Activated CD4-positive, alpha-beta memory T cell treated with anti-CD3 and anti-CD28 coated beads, Interleukin-2, amount 10 ng/mL, durations not matched to agents 7 days and 5 days (primary cell): ENCODE measurements at regions of chr6 and their contacts with region 1.

Region 1: DNA sequence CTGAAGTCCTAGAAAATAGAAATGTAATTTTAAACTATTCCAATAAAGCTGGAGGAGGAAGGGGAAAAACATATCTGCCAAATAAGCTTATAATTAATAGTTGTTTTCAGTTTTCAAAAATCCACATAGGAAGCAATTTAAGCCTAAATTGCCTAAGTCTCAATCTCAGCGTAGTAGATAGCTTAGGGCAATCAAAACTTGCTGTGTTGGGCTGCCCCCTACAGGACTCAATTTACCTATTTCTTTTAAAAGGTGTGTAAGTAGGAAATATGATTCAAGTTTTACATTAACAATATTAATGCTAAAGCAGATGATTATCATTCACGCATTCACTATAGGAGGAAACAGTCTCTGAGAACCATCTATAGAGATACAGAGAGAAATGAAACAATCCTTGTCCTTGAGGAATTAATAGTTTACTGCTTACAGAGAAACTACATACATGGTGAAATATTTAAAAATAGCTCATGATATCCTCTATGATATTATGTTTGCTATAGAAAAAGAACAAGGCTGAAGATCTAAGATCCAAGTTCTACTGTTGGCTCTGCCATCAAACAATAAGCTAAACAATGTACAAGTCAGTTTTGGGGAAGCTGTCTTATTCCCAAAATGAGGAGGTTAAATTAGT is 102.1 kb downstream of the ATG5 start:
- DNase-seq: peak; percentile 79
- H3K4me3 Mint-ChIP-seq: no peak overlapping the region
- H3K27ac Mint-ChIP-seq: no peak overlapping the region
- H3K4me1 Mint-ChIP-seq: peaks cover 43% of the 10 kb centered on the region
- H3K27me3 Mint-ChIP-seq: no peaks in the 10 kb centered on the region

Region 2: GRCh38 chr6:105431226-105431625 is 792.2 kb before region 1 on chr6:
- CTCF ChIA-PET with region 1: interaction called, 45 read pairs
- POLR2A ChIA-PET with region 1: no interaction called
- DNase-seq: no peak
- H3K4me3 Mint-ChIP-seq: no peak overlapping the region
- H3K27ac Mint-ChIP-seq: no peak overlapping the region
- H3K4me1 Mint-ChIP-seq: peaks cover 3% of the 10 kb centered on the region
- H3K27me3 Mint-ChIP-seq: peaks cover 4% of the 10 kb centered on the region

Region 3: GRCh38 chr6:105733565-105734162 is 489.8 kb before region 1 on chr6:
- CTCF ChIA-PET with region 1: interaction called, 25 read pairs
- POLR2A ChIA-PET with region 1: no interaction called
- DNase-seq: no peak
- H3K4me3 Mint-ChIP-seq: no peak overlapping the region
- H3K27ac Mint-ChIP-seq: no peak overlapping the region
- H3K4me1 Mint-ChIP-seq: peaks cover 48% of the 10 kb centered on the region
- H3K27me3 Mint-ChIP-seq: no peaks in the 10 kb centered on the region

Region 4: GRCh38 chr6:106085984-106086813 is 137.2 kb before region 1 on chr6 and contains the start of gene PRDM1:
- CTCF ChIA-PET with region 1: interaction called, 53 read pairs
- POLR2A ChIA-PET with region 1: interaction called, 10 read pairs
- DNase-seq: peak; percentile 90
- H3K4me3 Mint-ChIP-seq: peak within 1 kb of the TSS; percentile 97
- H3K27ac Mint-ChIP-seq: peak within 1 kb of the TSS; percentile 71
- H3K4me1 Mint-ChIP-seq: peaks cover 68% of the 10 kb centered on the region
- H3K27me3 Mint-ChIP-seq: no peaks in the 10 kb centered on the region
- total RNA-seq, gene PRDM1: 112 to 115 TPM

Region 5: GRCh38 chr6:106114492-106115265 is 108.7 kb before region 1 on chr6:
- CTCF ChIA-PET with region 1: interaction called, 28 read pairs
- POLR2A ChIA-PET with region 1: interaction called, 5 read pairs
- DNase-seq: peak; percentile 77
- H3K4me3 Mint-ChIP-seq: peak overlapping the region; percentile 36
- H3K27ac Mint-ChIP-seq: peak overlapping the region; percentile 85
- H3K4me1 Mint-ChIP-seq: peaks cover 95% of the 10 kb centered on the region
- H3K27me3 Mint-ChIP-seq: peaks cover 5% of the 10 kb centered on the region

Region 6: GRCh38 chr6:106181664-106182418 is 41.6 kb before region 1 on chr6:
- CTCF ChIA-PET with region 1: interaction called, 11 read pairs
- POLR2A ChIA-PET with region 1: no interaction called
- DNase-seq: no peak
- H3K4me3 Mint-ChIP-seq: no peak overlapping the region
- H3K27ac Mint-ChIP-seq: peak overlapping the region; percentile 41
- H3K4me1 Mint-ChIP-seq: peaks cover 58% of the 10 kb centered on the region
- H3K27me3 Mint-ChIP-seq: peaks cover under 1% of the 10 kb centered on the region

Region 7: DNA sequence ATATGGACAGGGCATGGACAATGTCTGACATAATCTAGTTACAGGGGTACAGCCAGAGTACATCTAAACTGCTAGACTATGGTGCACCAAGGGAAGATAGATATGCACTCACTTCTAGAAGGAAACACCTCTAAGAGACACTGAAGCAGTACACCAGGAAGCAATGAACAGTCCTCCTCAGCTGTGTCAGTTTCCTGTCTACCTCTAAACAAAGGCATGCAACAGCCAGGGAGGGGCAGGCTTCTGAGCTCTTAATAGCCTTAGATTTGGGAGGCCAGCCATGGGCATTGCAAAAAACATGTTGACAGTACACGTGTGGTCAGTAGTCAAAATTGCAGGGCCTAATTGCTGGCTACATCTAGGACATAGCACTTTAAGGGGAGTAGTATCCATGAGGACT is 158.5 kb after region 1 on chr6:
- CTCF ChIA-PET with region 1: no interaction called
- POLR2A ChIA-PET with region 1: no interaction called
- DNase-seq: no peak
- H3K4me3 Mint-ChIP-seq: no peak overlapping the region
- H3K27ac Mint-ChIP-seq: no peak overlapping the region
- H3K4me1 Mint-ChIP-seq: peaks cover 14% of the 10 kb centered on the region
- H3K27me3 Mint-ChIP-seq: peaks cover 10% of the 10 kb centered on the region

Region 8: GRCh38 chr6:106488494-106489370 is 265.3 kb after region 1 on chr6:
- CTCF ChIA-PET with region 1: no interaction called
- POLR2A ChIA-PET with region 1: no interaction called
- DNase-seq: no peak
- H3K4me3 Mint-ChIP-seq: no peak overlapping the region
- H3K27ac Mint-ChIP-seq: no peak overlapping the region
- H3K4me1 Mint-ChIP-seq: no peaks in the 10 kb centered on the region
- H3K27me3 Mint-ChIP-seq: peaks cover 15% of the 10 kb centered on the region